ENCODE measurements at regions of chr7 and their contacts with region 1.

Region 1: DNA sequence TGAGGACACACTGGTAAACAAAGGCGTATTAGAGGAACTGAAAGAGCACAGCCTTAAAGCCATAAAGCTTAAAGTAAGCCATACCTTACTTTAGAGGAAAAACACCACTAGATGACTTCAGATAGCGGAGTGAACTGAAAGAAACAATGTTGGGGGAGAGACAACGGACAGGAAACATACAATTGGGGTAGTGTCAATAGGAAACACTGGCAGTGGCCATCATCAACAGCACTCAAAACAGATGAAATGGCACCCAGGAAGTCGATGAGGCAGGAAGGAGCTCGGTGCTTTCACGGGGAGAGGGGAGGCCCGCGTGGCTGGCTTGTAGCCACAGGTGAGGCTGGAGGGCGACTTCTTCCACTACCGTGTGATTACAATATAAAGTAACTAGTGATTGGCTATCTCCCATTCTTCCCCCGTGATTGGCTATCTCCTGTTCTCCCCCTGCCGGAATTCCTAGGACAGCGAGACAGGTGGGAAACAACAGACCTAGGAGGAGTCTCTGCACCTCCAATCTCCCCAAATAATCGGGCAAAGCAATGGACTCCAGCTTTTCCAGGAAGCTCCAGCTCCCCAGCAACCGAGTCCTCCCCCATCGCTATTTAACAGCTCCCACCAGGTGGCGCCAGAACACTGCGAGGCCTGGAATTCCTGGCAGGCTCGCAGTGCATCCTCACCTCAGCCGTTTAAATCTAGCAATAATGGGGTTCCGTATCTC is 2.4 kb upstream of the TAS2R38 start:
- DNase-seq: peak; percentile 59 to 84 (median 82)
- ATAC-seq: peak; percentile 43 to 71
- H3K4me3 ChIP-seq: peak overlapping the region; percentile 12
- H3K27ac ChIP-seq: no peak overlapping the region
- H3K4me1 ChIP-seq: no peaks in the 10 kb centered on the region
- H3K27me3 ChIP-seq: no peaks in the 10 kb centered on the region

Region 2: DNA sequence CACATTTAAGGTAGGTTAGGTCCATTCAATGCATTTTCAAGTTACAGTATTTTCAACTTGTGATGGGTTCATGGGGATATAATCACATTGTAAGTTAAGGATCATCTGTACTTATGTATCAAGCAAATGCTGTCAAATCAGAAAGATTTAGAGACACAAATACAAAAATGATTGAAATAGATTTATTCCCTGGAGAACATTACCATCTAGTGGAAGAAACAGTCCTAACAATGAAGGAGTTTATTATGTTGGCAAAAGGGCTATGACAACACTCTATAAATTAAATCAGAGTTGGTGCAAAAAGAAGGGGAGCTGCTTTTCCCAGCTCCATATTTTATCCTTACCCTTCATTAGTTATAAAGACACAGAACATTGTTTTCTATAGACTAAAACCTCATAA is 212.9 kb after region 1 on chr7:
- intact Hi-C with region 1: loop called in 2 of 4 experiments (anchors 10 kb)
- DNase-seq: no peak
- ATAC-seq: no peak
- H3K4me3 ChIP-seq: no peak overlapping the region
- H3K27ac ChIP-seq: no peak overlapping the region
- H3K4me1 ChIP-seq: no peaks in the 10 kb centered on the region
- H3K27me3 ChIP-seq: no peaks in the 10 kb centered on the region

Measured in right cardiac atrium (tissue), 5 donors.